PC-9 (cell line): ENCODE measurements at regions of chr1 and their contacts with region 1.

Region 1: GRCh38 chr1:156767101-156767878 is at the start of gene PRCC:
- DNase-seq: peak; percentile 96 to 99
- H3K4me3 ChIP-seq: peak within 1 kb of the TSS; percentile 96
- H3K27ac ChIP-seq: peak within 1 kb of the TSS; percentile 76
- H3K4me1 ChIP-seq: peaks cover 18% of the 10 kb centered on the region
- H3K27me3 ChIP-seq: no peaks in the 10 kb centered on the region
- CTCF ChIP-seq: no peak
- total RNA-seq, gene PRCC: 47.8 and 56.6 TPM in 2 replicates

Region 2: DNA sequence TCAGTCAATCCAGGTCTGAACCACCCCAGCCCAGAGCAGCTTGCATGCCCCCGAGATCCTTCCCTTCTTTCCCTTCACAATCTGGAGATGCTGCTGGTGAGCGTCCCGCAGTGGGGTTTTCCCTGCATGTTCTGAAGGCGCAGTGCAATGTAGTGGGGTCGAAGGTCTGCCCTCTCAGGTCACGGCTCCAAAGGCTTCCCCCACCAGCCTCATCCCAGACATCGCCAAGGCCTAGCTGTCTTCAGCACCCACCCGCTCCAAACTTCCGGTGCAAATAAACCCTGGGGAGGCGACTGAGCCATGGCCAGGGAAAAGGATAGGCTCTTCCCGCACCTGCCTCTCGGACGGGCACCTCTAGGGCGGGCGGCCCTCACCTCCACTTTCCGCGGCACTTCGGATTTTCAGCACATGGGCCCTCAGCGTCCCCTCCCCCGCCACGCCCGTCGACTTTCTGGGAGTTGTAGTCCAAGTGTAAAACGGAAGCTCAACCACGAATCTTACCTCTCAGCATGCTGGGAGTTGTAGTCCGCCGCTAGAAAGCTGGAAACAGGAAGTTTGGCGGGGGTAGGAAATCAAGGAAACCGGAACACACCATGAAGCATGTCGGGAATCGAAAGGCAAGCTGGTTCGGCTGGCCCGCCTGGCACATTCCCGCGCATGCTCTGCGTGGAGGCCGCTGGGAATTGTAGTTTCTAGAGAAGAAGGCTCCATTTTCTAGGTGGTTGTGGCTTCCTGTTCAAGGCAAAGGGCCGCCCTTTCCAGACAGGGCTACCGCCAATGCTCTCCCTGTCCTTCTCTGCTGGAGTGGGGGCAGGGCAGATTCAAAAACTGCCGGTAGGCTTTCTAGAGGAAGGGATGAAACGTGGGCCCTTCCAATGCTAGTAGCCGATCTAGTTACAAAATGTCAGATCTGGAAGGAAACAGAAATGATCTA is 26.3 kb before region 1 on chr1 and contains the start of gene MRPL24:
- CTCF ChIA-PET with region 1: no interaction called
- POLR2A ChIA-PET with region 1: interaction called, 11 read pairs
- intact Hi-C with region 1: loop called (anchors 1 kb)
- DNase-seq: peak; percentile 97 to 99
- H3K4me3 ChIP-seq: peak within 1 kb of the TSS; percentile 79
- H3K27ac ChIP-seq: peak within 1 kb of the TSS; percentile 60
- H3K4me1 ChIP-seq: peaks cover 17% of the 10 kb centered on the region
- H3K27me3 ChIP-seq: no peaks in the 10 kb centered on the region
- CTCF ChIP-seq: no peak
- total RNA-seq, gene MRPL24: 74.1 and 85.3 TPM in 2 replicates

Region 3: DNA sequence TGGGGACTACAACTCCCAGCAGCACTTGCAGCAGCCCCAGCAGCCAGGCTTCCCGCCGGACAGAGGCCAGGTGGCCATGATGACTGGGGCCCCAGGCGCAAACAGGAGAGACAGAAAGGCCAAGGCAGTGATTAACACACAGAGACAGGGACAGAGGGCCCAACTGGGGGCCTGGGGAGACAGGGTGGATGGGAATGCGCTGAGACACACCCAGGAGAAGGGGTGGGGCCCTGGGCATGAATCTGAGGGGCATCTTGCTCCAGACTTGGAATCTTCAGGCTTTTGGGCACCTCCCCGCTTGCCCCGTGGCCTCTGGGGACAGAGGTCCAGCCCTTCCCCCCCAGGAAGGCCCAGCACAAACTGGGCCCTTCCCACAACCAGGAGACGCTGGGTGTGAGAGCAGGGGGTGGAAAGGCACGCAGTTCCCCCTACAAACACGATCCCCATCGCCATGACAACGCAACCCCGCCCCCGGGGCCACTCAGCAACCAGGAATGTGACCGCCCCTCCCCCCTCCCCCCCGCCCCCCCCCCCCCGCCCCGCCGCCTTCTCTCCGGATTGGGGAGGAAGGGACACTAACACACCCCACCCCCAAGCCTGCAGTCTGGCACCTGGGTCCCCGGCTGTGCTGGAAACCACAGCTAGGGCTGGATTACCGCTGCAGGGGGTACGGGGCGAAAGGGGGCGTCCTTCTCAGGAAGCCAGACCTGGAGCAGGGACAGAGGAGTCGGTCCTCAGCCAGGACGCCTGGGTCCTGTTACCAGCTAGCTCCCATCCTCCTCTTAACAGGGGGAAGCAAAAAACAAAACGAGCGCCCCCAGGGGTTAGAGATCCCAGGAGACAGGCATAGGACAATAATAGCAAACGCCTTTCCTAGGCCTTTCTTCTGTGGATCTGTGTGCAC is 20.3 kb before region 1 on chr1:
- CTCF ChIA-PET with region 1: interaction called, 4 read pairs
- POLR2A ChIA-PET with region 1: interaction called, 26 read pairs
- intact Hi-C with region 1: loop called (anchors 1 kb)
- DNase-seq: peak; percentile 89 to 96
- H3K4me3 ChIP-seq: peak overlapping the region; percentile 95
- H3K27ac ChIP-seq: peak overlapping the region; percentile 93
- H3K4me1 ChIP-seq: peaks cover 28% of the 10 kb centered on the region
- H3K27me3 ChIP-seq: no peaks in the 10 kb centered on the region
- CTCF ChIP-seq: peak; percentile 42; the same call in 1 of the 2 replicates

Region 4: DNA sequence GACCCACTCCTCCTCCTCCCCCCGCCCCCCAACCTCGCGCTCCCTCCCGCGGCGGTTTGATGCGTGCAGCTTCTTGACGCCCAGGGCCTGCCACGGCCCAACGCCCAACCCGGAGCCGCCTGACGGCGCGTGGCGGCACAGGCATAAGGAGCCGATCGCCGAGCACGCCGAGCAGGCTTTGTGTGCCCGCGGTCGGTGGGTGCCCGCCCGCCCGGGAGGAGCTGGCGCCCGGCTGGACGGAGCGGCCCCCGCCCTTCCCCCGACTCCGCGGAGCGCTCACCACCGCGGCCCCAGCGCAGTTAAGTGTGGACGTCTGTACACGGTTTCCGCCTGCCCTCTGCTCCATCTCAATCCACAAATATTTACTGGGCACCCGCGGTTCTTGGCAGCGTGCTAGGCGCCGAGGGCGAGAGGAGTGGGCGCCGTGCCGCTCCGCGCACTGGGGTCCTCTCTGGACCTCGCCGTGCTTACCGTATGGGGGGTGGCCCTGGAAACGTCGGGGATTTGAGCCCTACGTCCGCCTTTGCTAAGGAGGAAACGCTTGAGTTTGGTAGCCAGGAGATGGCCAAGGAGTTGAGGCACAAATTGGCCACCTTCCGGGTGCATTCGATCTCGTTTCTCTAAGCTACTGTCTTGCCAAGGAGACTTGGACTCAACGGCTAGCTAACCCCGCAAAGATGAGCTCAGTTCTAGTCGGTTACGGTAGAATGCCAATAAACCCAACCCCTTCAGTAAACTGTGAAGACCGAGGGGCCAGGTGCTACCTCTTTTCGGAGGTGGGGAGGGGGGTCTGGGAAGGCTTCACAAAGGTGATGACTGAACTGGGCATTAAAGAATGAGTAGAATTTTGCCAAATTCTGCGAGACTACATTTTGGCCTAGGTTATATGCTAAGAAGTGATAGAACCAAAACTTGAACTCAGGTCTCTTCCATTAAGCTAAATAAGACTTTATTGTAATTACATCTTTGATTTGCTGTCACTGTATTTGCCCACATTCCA is 15.2 kb before region 1 on chr1:
- CTCF ChIA-PET with region 1: interaction called, 7 read pairs
- POLR2A ChIA-PET with region 1: interaction called, 26 read pairs
- intact Hi-C with region 1: loop called (anchors 1 kb)
- DNase-seq: peak; percentile 87 to 95
- H3K4me3 ChIP-seq: peak overlapping the region; percentile 95
- H3K27ac ChIP-seq: peak overlapping the region; percentile 59
- H3K4me1 ChIP-seq: peaks cover 21% of the 10 kb centered on the region
- H3K27me3 ChIP-seq: no peaks in the 10 kb centered on the region
- CTCF ChIP-seq: no peak

Region 5: DNA sequence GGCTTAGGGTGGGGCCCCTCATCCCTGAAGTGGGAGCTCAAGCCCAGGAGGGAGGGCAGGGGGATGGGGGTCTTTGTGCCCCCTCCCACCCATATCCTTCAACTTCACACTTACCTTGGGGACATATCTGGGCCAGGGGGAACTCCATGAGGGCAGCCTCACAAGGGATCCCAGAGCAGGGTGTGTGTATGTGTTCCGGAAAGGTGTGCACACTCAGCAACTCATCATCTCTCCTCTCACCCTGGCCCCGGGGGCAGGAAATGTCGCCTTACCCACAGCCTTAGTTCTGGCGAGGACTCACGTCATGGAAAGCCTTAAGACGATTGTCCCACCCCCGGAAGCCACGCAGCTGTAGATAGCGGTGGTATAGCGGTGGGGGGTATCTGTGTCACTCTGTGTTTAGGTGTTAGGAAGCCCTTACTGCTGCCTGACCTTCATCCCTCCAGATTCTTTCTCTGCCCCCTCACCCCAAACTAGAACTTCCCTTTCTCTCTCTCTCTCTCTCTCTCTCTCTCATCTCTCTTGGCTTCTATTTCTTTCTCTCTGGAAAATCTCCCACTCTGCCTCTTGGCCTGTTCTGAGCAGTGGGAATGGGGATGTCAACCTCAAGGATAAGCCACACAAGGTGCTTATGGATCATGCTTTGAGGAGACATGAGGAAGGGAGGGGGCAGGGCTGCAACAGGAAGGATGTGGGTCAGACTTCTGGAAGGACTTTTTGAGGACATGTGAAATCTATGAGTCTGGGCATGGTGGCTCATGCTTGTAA is 49.5 kb after region 1 on chr1 and contains the start of gene SH2D2A:
- CTCF ChIA-PET with region 1: no interaction called
- POLR2A ChIA-PET with region 1: no interaction called
- intact Hi-C with region 1: no loop called
- DNase-seq: peak in 1 of 2 experiments; percentile 51
- H3K4me3 ChIP-seq: no peak within 1 kb of the TSS
- H3K27ac ChIP-seq: no peak within 1 kb of the TSS
- H3K4me1 ChIP-seq: peaks cover 44% of the 10 kb centered on the region
- H3K27me3 ChIP-seq: no peaks in the 10 kb centered on the region
- CTCF ChIP-seq: no peak
- total RNA-seq, gene SH2D2A: 4.0 and 5.8 TPM in 2 replicates